Colonic mucosa (tissue), 4 donors: ENCODE measurements at regions of chr10 and their contacts with region 1.

Region 1: DNA sequence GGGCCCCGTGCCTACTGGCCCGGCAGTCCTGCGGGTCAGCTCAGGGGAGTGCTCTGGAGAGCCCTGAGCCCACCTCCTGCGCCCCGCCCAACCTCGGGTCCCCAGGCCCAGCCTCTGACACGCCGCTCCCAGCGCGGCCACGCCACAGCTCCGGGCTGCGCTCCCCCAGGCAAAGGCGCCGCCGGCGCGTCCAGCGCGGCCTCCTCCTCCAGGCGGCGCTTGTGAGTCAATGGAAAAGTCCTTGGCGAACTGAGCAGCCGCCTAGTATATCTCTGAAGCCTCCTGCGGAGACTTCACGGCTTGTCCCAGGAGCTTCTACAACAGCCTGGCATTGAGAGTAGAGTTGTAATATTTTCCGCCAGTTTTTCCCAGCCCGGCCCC is 29.5 kb upstream of the BMS1 start:
- DNase-seq: peak; percentile 88
- H3K4me3 ChIP-seq: peak overlapping the region; percentile 31
- H3K27ac ChIP-seq: no peak overlapping the region
- H3K4me1 ChIP-seq: peaks cover 10% of the 10 kb centered on the region
- H3K27me3 ChIP-seq: peaks cover 29% of the 10 kb centered on the region
- CTCF ChIP-seq: peak; percentile 76

Region 2: GRCh38 chr10:42864575-42864974 is 111.5 kb after region 1 on chr10:
- intact Hi-C with region 1: loop called (anchors 5 kb)
- DNase-seq: no peak
- H3K4me3 ChIP-seq: no peak overlapping the region
- H3K27ac ChIP-seq: no peak overlapping the region
- H3K4me1 ChIP-seq: peaks cover 5% of the 10 kb centered on the region
- H3K27me3 ChIP-seq: peaks cover 8% of the 10 kb centered on the region
- CTCF ChIP-seq: no peak

Region 3: GRCh38 chr10:42932735-42933447 is 179.8 kb after region 1 on chr10:
- intact Hi-C with region 1: no loop called
- DNase-seq: peak; percentile 34
- H3K4me3 ChIP-seq: peak overlapping the region; percentile 23
- H3K27ac ChIP-seq: no peak overlapping the region
- H3K4me1 ChIP-seq: peaks cover 4% of the 10 kb centered on the region
- H3K27me3 ChIP-seq: peaks cover 7% of the 10 kb centered on the region
- CTCF ChIP-seq: no peak

Region 4: DNA sequence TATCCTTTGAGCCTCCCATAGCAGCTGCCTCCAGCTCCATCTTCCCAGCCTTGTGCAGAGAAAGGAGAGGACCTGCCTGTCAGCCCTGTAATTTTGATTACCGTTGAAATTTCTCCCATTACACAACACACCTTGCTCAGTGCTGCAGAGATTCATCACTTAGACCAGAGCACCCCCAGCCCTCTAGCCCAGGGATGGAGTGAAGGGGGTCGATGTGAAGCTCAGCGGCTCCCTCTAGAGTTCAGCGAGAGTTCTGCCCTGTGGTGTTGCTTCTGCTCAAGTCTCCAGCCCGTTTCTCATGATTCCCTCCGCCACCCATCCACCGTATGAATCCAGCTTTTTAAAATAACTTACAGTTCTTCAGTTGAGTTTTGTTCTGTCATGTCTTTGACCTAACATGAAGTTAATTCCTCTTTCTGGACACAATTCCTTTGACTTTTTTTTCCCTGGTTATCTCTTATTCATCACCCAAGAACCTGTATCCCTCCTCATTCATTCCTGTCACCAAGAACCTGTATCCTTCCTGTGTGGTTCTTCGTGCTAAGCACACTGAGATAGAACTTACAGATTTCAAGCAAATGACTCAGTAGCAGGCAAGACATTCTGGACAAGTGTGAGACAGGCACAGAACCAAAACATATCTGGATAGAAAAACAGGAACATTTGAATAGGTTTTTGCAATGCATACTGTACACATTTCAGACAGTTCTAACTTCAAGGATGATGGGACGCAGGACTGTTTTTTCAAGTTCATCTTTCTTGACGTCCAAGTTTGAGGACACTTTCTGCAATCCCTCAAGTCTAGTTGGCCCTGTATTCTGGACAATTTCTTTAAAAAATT is 930.6 kb after region 1 on chr10:
- intact Hi-C with region 1: no loop called
- DNase-seq: no peak
- H3K4me3 ChIP-seq: no peak overlapping the region
- H3K27ac ChIP-seq: no peak overlapping the region
- H3K4me1 ChIP-seq: no peaks in the 10 kb centered on the region
- H3K27me3 ChIP-seq: no peaks in the 10 kb centered on the region
- CTCF ChIP-seq: peak; percentile 19